GM10248 (cell line): ENCODE measurements at regions of chr22 and their contacts with region 1.

Region 1: GRCh38 chr22:49880281-49880680 is 26.6 kb downstream of the ZBED4 start:
- DNase-seq: peak; percentile 69
- CTCF ChIP-seq: no peak

Region 2: DNA sequence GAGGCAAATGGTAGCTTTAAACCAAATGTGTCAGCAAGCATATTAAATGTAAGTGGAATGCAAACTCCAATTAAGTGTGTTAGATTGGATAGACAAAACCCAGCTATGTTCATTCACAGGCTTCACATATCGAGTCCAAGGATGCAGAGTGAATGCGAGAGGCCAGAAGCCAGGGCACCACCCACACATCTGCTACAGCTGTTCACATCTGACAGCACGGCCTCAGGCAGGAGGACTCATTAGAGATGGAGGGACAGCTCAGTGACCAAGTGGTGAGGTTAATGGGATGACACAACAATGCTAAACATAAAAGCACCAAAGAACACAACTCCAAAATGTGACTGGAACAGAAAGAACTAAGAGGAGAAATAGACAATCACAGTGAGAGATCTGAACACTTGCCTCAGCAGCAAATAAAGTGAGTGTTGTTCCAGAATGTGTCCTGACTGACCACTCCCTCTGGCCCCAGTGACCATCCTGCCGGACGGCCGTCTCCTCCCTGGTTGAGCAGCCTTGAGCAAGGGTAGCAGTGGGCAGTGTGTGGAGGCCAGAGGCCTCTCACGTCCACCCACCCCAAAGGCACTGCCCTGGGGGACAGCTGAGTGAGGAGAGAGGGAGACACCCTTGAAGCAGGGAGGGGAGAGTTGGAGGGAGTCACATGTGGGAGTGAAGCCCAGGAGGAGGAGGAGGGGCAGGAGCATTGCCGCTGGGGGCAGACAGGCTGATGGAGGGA is 14.2 kb after region 1 on chr22:
- CTCF ChIA-PET with region 1: interaction called, 18 read pairs
- POLR2A ChIA-PET with region 1: no interaction called
- DNase-seq: no peak
- CTCF ChIP-seq: no peak